GM10248 (cell line): ENCODE measurements at regions of chr5 and their contacts with region 1.

Region 1: GRCh38 chr5:146130440-146131045 is 25.2 kb upstream of the PLAC8L1 start:
- DNase-seq: no peak
- CTCF ChIP-seq: peak; percentile 48

Region 2: GRCh38 chr5:145681686-145682085 is 448.9 kb before region 1 on chr5:
- CTCF ChIA-PET with region 1: interaction called, 10 read pairs
- POLR2A ChIA-PET with region 1: no interaction called
- DNase-seq: peak; percentile 49
- CTCF ChIP-seq: peak; percentile 64

Region 3: DNA sequence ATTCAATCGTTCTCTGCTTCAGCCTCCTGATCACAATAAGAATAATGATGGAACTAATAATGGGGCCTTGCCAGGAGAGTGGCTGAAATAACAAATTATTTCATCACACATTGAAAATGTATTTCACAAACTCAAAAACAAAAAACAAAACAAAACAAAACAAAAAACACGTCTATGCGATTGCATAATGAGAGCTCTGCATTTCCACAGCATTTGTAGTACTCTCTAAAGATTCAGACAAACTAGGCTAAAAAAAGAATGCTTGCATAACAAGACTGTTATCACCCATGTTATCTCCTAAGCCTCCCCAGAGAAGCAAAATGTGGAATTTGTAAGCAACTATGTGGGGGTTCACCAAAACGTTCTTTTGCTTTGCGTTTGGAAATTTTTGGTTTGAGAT is 343.5 kb before region 1 on chr5:
- CTCF ChIA-PET with region 1: no interaction called
- POLR2A ChIA-PET with region 1: no interaction called
- DNase-seq: no peak
- CTCF ChIP-seq: no peak

Region 4: DNA sequence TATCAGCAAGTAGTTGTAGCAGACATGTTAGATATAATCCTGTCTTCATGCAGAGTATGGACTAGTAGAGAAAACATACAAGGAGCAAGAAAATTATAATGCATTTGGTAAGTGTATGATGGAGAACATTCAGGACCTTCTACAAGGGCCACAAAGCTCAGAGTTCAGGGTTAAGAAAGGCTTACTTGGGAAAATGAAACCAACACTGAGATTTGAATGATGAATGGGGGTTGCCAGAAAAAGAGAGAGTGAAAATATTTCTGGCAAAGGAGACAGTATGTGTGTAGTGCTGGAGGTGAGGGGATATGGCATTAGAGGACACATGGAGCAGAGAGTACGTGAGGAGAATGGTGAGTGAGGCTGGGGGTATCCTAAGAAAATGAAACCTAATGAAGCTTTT is 934.5 kb after region 1 on chr5:
- CTCF ChIA-PET with region 1: no interaction called
- POLR2A ChIA-PET with region 1: no interaction called
- DNase-seq: no peak
- CTCF ChIP-seq: no peak